ENCODE measurements at regions of chr18 and their contacts with region 1.

Region 1: DNA sequence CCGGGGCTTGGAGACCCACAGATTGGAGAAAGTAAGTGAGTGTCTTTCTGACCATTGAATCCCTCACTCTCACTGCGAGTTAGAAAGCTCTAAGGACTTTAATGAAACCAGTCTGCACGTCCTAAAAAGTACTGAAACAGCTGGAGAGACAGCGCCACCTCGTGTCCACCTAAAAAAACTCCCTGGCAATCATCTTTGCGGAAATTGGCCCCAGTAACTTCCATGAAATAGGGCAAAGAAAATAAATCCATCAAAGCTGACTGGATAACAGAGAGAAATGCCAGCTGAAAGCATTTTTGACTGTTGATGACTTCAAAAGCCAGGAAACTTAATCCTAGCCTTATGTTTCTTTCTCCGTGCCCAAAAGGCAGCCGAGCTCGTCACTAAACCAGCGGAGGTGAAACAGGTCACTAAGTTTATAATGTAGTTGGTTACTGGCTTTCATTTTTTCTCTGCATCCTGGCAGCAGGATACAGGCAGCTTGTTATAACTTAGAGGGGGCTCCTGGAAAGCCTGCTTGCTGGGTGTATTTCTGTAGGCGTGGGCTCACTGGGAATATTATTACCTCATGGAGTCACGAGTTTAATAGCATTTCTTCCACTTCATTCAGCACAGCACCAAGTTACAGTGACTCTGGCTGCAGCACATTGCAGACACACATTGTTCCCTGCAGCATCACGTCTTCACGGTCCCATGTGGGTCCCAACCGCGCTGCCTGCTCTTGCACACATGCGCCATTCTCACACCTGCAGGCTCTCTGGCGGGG is 266.5 kb downstream of the HRH4 start:
- DNase-seq: peak; percentile 52 to 90 (median 78)

Region 2: DNA sequence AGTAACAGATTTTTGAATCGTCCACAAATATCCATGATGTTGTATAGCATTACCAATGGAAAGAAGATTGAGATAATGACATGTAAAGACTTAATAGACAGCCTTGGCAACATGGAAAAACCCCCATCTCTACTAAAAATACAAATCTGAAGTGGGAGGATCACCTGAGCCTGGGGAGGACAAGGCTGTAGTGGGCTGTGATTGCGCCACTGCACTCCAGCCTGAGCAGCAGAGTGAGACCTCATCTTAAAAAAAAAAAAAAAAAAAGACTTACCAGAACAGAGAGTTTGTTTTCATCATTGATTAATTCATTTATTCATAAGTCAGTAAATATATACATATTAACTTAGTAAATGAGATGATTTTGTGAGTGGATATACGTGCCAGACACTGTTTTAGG is 322.3 kb before region 1 on chr18:
- intact Hi-C with region 1: no loop called
- DNase-seq: peak in 1 of 42 donors; percentile 4

Region 3: DNA sequence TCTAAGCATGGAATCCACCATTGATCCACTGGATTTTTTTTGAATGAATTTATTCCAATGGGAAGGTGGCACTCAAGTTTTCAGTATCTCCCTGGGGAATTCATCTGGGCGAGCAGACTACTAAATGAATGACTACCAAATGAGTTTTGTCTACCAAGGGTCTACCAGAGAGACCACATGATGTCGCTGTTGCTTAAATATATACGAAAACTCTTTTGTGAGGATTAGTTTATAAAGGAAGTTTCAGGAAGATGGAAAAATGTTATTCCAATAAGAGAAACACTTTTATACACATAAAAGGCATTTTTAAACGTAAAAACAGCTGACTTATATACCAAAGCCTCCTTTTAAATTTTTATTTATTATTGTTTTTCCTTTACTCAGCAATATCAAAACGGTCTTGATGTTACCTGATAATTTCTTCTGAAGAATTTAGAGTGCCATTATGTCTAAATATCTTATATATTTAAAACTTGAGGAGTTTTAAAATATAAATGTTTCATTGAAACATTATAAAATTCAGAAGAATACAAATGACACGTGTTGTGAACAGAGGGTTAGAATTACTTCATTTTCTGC is 126.7 kb before region 1 on chr18:
- intact Hi-C with region 1: loop called (anchors 2 kb)
- DNase-seq: peak in 15 of 42 donors; percentile 13 to 70 (median 32)

Region 4: GRCh38 chr18:24853076-24853475 is 126.2 kb after region 1 on chr18:
- intact Hi-C with region 1: no loop called
- DNase-seq: no peak

Region 5: GRCh38 chr18:25033747-25034471 is 307.0 kb after region 1 on chr18:
- intact Hi-C with region 1: no loop called
- DNase-seq: no peak

Measured in head of caudate nucleus (tissue), 42 donors.